Breast epithelium (tissue), 4 donors: ENCODE measurements at regions of chr16 and their contacts with region 1.

Region 1: GRCh38 chr16:77062878-77063671 is 127.9 kb upstream of the MON1B start:
- DNase-seq: no peak
- H3K4me3 ChIP-seq: no peak overlapping the region
- H3K27ac ChIP-seq: no peak overlapping the region
- H3K4me1 ChIP-seq: no peaks in the 10 kb centered on the region
- H3K27me3 ChIP-seq: no peaks in the 10 kb centered on the region
- CTCF ChIP-seq: no peak
- POLR2A ChIP-seq: no peak

Region 2: GRCh38 chr16:77009453-77009852 is 53.6 kb before region 1 on chr16:
- intact Hi-C with region 1: no loop called
- DNase-seq: no peak
- H3K4me3 ChIP-seq: no peak overlapping the region
- H3K27ac ChIP-seq: no peak overlapping the region
- H3K4me1 ChIP-seq: no peaks in the 10 kb centered on the region
- H3K27me3 ChIP-seq: no peaks in the 10 kb centered on the region
- CTCF ChIP-seq: no peak
- POLR2A ChIP-seq: no peak

Region 3: DNA sequence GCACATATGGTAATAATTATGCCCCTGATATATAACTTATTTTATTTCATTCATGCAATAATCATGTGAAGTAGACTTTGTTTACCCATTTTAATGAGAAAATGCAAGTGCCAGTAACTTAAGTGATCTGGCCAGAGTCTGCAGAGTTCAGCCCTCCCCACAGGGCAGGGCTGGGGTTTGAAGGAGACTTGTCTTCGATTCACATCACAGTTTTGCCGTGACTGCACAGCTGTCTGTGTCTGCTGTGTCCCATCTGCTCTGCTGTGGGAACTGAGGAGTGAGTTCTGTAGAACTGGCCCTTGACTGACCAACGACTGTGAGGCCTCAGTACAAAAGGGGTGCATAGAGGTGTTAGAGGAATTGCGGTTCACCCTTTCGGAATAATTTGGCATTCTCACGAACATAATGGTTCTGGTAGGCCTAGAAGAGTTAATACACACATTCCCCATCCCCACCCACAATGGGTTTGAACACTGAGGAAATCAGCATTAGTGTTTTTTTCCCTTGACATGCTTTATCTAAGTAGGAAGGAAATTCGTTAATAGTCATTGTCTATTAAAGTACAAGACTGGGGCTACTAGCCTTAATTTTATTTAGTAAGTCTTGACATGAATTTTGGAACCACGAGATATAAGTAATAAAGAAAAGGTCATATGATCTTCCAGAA is 14.3 kb after region 1 on chr16:
- intact Hi-C with region 1: loop called (anchors 2 kb)
- DNase-seq: no peak
- H3K4me3 ChIP-seq: no peak overlapping the region
- H3K27ac ChIP-seq: no peak overlapping the region
- H3K4me1 ChIP-seq: no peaks in the 10 kb centered on the region
- H3K27me3 ChIP-seq: no peaks in the 10 kb centered on the region
- CTCF ChIP-seq: no peak
- POLR2A ChIP-seq: no peak